Transverse colon (tissue), 4 donors: ENCODE measurements at regions of chr6 and their contacts with region 1.

Region 1: DNA sequence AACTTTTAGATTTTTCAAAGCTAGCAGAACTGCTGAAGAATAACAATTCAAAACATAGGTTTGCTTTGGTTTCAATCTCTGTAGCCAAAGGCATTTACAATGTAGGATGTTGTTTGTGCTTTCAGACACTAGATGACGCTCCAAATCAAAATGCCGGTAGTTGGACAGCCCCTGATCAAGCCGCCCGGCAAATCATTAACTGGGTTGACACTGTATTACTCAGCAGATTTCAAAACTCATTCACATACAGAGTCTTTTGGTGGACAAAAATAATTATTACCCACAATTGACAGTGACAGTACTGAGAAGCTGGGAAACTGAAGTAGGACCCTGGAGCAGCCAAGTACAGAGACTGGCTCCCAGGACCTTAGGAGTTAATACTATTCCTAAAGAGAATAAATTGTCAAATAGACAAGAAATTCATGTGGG is 21.3 kb upstream of the HFE start:
- DNase-seq: peak; percentile 81
- H3K4me3 ChIP-seq: no peak overlapping the region
- H3K27ac ChIP-seq: peak overlapping the region in 3 of 4 donors; percentile 7 to 61 (median 29)
- H3K4me1 ChIP-seq: peaks cover 0 to 11% (median 6%) of the 10 kb centered on the region in 4 donors
- H3K27me3 ChIP-seq: no peaks in the 10 kb centered on the region
- CTCF ChIP-seq: peak; percentile 76 to 93 (median 87)
- EP300 ChIP-seq: no peak
- POLR2A ChIP-seq: no peak

Region 2: DNA sequence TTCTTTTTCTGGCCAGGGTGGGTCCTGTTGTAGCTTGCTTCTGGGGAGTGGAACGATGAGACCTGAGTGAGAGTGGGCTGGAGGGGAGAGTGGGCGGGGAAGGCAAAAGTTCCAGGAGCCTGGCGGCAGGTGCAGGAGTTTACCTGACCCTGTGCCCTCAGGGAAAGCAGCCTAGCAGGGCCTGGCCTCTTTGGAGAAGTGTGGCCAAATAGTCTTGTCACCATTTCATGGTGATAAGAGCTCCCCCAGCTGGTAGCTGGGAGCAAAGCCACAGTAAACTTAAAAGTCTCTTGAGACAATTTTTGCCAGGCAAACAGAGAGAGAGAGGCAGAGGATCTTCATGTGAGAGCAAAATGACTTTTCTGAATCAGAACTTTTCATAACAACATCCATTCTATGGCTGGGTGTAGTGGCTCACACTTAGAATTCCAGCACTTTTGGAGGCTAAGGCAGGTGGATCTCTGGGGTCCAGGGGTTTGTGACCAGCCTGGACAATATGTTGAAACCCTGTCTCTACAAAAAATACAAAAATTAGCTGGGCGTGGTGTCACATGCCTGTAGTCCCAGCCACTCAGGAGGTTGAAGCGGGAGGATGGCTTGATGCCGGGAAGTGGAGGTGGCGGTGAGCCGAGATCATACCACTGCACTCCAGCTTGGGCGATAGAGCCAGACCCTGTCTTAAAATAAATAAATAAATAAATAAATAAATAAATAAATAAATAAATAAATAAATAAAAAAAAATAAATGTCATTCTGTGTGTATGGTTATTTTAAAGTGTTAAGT is 575.8 kb before region 1 on chr6:
- in situ Hi-C with region 1: no loop called
- intact Hi-C with region 1: no loop called
- DNase-seq: peak; percentile 82
- H3K4me3 ChIP-seq: no peak overlapping the region
- H3K27ac ChIP-seq: peak overlapping the region in 1 of 4 donors; percentile 42
- H3K4me1 ChIP-seq: peaks cover 0 to 9% (median 0%) of the 10 kb centered on the region in 4 donors
- H3K27me3 ChIP-seq: no peaks in the 10 kb centered on the region
- CTCF ChIP-seq: peak; percentile 59 to 83 (median 80)
- EP300 ChIP-seq: no peak
- POLR2A ChIP-seq: no peak

Region 3: DNA sequence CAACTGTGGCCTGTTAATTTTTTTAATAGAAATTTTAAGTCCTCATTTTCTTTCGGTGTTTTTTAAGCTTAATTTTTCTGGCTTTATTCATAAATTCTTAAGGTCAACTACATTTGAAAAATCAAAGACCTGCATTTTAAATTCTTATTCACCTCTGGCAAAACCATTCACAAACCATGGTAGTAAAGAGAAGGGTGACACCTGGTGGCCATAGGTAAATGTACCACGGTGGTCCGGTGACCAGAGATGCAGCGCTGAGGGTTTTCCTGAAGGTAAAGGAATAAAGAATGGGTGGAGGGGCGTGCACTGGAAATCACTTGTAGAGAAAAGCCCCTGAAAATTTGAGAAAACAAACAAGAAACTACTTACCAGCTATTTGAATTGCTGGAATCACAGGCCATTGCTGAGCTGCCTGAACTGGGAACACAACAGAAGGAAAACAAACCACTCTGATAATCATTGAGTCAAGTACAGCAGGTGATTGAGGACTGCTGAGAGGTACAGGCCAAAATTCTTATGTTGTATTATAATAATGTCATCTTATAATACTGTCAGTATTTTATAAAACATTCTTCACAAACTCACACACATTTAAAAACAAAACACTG is 31.4 kb after region 1 on chr6:
- in situ Hi-C with region 1: loop called in 2 of 4 experiments (anchors 5 kb)
- intact Hi-C with region 1: loop called (anchors 1 kb)
- DNase-seq: peak; percentile 69
- H3K4me3 ChIP-seq: no peak overlapping the region
- H3K27ac ChIP-seq: no peak overlapping the region
- H3K4me1 ChIP-seq: no peaks in the 10 kb centered on the region
- H3K27me3 ChIP-seq: no peaks in the 10 kb centered on the region
- CTCF ChIP-seq: peak; percentile 70 to 88 (median 83)
- EP300 ChIP-seq: no peak
- POLR2A ChIP-seq: no peak

Region 4: DNA sequence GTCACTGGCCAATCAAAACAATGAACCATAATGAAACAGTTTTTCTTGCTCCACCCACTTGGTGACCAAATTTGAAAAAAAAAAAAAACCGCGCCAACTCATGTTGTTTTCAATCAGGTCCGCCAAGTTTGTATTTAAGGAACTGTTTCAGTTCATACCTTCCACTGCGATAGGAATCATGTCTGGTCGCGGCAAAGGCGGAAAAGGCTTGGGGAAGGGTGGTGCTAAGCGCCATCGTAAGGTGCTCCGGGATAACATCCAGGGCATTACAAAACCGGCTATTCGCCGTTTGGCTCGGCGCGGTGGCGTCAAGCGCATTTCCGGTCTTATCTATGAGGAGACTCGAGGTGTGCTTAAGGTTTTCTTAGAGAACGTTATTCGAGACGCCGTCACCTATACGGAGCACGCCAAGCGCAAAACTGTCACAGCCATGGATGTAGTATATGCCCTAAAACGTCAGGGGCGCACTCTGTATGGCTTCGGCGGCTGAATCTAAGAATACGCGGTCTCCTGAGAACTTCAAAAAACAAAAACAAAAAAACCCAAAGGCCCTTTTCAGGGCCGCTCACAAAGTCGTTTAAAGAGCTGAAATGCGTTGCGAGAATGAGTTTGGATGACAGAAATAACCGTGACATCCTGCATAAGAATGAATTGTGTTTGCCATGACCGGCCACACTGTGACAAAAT is 37.9 kb after region 1 on chr6:
- in situ Hi-C with region 1: loop called in 2 of 4 experiments (anchors 5 kb)
- intact Hi-C with region 1: no loop called
- DNase-seq: peak; percentile 92
- H3K4me3 ChIP-seq: peak overlapping the region; percentile 23 to 53 (median 32)
- H3K27ac ChIP-seq: peak overlapping the region; percentile 91 to 95 (median 93)
- H3K4me1 ChIP-seq: peaks cover 6 to 23% (median 13%) of the 10 kb centered on the region in 4 donors
- H3K27me3 ChIP-seq: no peaks in the 10 kb centered on the region
- CTCF ChIP-seq: peak; percentile 42 to 73 (median 54)
- EP300 ChIP-seq: peak; percentile 49
- POLR2A ChIP-seq: peak; percentile 100

Region 5: DNA sequence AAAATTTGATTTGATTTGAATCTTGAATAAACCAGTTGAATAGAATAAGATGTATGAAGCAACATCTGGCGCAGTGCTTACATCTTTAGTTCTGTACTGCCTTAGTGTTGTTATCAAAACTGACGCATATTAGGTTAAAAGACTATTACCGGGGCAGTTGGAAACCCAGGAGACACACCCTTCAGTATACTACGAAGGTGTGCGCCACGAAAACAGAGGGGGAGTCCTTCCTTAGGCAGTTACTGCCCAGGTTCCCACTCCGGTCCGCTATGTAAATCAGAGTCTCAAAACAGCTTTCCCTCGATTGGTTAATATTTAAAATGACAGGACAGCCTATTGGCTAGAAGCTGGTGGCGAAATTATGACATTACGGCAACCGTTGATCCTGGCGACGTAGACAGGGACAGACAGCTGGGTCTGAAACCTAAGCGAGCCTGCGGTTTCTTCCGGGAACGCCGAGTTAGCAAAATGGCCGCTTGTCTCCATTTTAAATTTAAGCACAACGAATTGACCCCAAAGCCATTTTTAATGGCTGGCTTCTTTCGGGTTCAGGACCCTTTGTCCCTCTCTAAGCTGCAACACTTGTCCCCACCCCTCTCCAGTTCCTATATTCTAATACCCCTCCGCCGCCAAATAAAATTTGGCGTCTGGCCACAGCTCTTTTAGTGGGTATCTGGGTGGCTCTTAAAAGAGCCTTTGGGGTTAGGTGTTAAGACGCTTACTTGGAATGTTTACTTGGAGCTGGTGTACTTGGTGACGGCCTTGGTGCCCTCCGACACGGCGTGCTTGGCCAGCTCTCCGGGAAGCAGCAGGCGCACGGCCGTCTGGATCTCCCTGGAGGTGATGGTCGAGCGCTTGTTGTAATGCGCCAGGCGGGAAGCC is 57.1 kb after region 1 on chr6:
- in situ Hi-C with region 1: no loop called
- intact Hi-C with region 1: loop called (anchors 2 kb)
- DNase-seq: peak; percentile 97
- H3K4me3 ChIP-seq: peak overlapping the region; percentile 59 to 84 (median 70)
- H3K27ac ChIP-seq: peak overlapping the region; percentile 93 to 99 (median 98)
- H3K4me1 ChIP-seq: peaks cover 6 to 21% (median 20%) of the 10 kb centered on the region in 4 donors
- H3K27me3 ChIP-seq: no peaks in the 10 kb centered on the region
- CTCF ChIP-seq: peak in 1 of 5 experiments; percentile 15
- EP300 ChIP-seq: peak; percentile 97
- POLR2A ChIP-seq: peak; percentile 89